ENCODE measurements at regions of chr15 and their contacts with region 1.

Region 1: DNA sequence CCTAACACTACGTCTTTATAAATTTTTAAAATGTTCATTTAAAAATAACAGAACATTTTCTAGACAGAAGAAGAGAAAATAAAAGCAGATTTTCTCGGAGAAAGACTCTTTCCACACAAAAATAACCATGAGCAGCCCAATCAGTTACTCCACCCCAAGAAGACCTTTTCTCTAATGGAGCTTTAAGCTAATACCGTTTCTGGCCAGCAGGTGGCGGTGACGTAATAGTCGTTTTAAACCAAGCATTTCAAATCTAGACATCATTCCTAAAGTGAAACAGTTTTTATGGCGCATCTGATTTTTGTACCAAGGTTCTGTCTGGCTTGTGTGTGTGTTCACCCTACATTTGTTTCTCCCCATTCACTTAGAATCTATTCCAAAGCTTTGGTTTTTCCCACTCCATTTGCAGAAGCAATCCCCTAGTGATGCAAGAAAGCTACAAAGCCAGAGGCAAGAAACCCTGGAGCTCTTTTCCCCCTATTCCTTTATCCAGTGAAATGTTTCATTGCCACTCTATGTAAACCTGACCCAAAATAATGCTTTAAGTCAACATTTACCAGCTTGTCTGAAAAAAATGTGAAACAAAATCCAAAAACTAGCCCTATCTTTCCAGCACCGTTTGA is 336.7 kb upstream of the IGF1R start:
- DNase-seq: peak; percentile 79 to 89 (median 81)
- H3K4me3 ChIP-seq: no peak overlapping the region
- H3K27ac ChIP-seq: no peak overlapping the region
- H3K4me1 ChIP-seq: no peaks in the 10 kb centered on the region
- H3K27me3 ChIP-seq: peaks cover 0 to 4% (median 0%) of the 10 kb centered on the region in 5 experiments

Region 2: DNA sequence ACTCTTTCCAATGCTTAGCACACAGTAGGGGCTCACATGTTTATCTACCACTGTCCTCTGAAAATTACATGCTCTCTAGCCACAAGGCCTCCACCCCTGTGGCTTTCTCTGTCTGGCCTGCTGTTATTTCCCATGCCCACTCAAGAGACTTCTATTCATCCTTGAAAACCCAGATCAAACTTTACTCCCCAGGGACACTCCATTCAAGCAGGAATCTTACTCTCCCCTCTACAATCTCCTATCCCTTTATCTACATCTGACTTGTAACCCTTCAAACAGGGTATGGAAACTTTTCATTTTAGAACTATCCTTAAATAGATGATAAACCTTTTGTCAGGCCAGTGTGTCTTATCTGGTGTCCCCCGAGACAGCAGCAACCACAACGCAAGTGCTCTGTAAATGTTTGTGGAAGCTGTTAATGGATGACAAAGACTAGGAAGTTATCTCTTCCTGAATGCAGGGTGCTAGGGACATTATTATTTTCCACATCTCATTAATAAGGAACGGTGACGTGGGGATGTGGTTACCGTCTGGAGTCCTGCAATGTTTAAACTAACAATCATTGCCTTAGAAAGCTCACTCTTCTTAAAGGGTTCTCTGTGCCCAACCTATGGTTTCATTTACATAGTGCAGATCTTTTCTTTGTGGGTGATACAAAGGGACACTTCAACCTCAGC is 28.9 kb before region 1 on chr15:
- CTCF ChIA-PET with region 1: no interaction called
- POLR2A ChIA-PET with region 1: no interaction called
- DNase-seq: peak; percentile 29 to 67 (median 44)
- H3K4me3 ChIP-seq: no peak overlapping the region
- H3K27ac ChIP-seq: no peak overlapping the region
- H3K4me1 ChIP-seq: peaks cover 0 to 13% (median 0%) of the 10 kb centered on the region in 4 experiments
- H3K27me3 ChIP-seq: peaks cover 0 to 13% (median 7%) of the 10 kb centered on the region in 5 experiments

Region 3: GRCh38 chr15:98375513-98376340 is 64.0 kb after region 1 on chr15:
- CTCF ChIA-PET with region 1: no interaction called
- POLR2A ChIA-PET with region 1: no interaction called
- DNase-seq: no peak
- H3K4me3 ChIP-seq: no peak overlapping the region
- H3K27ac ChIP-seq: no peak overlapping the region
- H3K4me1 ChIP-seq: peaks cover 0 to 2% (median 0%) of the 10 kb centered on the region in 4 experiments
- H3K27me3 ChIP-seq: peaks cover 0 to 2% (median 0%) of the 10 kb centered on the region in 5 experiments

Region 4: DNA sequence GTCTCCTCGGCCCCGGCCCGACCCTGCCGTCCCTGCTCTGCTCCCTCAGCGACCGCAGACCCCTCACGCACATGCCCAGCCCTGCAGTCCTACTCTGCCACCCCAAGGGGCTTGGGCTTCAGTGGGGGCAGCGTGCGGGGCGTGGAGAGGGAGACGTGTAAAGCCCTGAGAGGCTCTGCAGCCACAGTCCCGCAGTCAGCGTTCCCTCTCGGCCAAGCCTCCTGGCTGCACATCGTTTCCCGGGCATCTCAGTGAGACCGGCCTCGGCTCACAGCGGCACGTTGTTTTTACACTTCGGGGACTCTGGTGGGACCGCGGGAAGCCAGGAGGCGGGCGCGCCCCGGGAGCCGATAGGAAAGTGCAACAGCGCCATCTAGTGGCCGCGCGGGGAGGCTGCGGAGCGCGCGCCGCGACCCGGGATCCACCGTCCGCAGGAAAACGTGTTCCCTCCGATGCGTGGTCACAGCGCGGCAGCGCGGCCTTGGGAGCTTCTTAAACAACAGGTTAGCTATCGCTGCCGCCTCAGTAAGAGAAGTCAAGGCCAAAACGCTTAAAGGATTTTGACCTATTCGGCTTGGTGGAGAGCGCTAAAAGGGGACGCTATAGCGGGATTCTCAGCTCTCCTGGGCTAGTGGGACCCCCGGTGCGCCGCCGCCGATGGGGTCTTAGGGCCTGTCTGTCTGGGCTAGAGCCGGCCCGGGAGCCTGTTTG is 109.9 kb after region 1 on chr15:
- CTCF ChIA-PET with region 1: interaction called, 42 read pairs
- POLR2A ChIA-PET with region 1: no interaction called
- DNase-seq: peak; percentile 50 to 67 (median 65)
- H3K4me3 ChIP-seq: peak overlapping the region in 4 of 7 experiments; percentile 19 to 56 (median 25)
- H3K27ac ChIP-seq: no peak overlapping the region
- H3K4me1 ChIP-seq: peaks cover 0 to 17% (median 11%) of the 10 kb centered on the region in 4 experiments
- H3K27me3 ChIP-seq: peaks cover 0 to 81% (median 35%) of the 10 kb centered on the region in 5 experiments

Region 5: DNA sequence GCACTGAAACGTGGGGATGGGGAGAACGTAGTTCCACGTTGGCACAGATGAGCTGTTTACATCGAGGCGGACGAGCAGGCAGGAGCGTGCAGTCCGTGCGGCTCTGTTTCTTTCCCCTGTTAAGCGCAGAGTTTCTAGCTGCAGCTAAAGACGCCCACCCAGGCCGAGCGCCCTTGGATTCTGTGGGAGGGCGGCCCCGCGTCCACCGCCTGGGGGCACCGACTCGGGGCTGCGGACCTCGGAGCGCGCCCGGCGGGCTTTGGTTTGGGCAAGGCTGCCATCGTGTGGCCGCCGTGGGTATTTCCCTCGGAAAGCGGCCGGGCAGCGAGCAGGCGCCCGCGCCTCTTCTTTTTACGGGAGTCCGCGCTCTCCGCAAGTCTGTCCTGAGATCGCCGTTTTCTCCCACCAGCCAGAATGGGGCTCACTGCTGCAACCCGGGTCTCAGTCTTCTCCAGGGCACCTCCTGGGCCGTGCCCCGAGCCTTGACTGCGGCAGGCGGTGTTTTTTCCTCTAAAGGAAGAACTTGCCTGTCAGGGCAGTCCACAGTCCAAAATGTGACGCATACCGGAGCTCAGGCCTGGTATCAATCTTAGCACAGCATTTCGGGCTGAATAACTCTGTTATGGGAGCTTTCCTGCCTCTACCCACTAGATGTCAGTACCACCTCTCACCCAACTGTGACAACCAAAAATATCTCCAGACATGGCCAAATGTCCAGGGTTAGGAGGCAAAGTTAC is 116.7 kb after region 1 on chr15:
- CTCF ChIA-PET with region 1: interaction called, 42 read pairs
- POLR2A ChIA-PET with region 1: no interaction called
- DNase-seq: peak; percentile 69 to 81 (median 77)
- H3K4me3 ChIP-seq: peak overlapping the region in 6 of 7 experiments; percentile 16 to 76 (median 51)
- H3K27ac ChIP-seq: no peak overlapping the region
- H3K4me1 ChIP-seq: peaks cover 0 to 9% (median 7%) of the 10 kb centered on the region in 4 experiments
- H3K27me3 ChIP-seq: peaks cover 0 to 57% (median 16%) of the 10 kb centered on the region in 5 experiments

Region 6: DNA sequence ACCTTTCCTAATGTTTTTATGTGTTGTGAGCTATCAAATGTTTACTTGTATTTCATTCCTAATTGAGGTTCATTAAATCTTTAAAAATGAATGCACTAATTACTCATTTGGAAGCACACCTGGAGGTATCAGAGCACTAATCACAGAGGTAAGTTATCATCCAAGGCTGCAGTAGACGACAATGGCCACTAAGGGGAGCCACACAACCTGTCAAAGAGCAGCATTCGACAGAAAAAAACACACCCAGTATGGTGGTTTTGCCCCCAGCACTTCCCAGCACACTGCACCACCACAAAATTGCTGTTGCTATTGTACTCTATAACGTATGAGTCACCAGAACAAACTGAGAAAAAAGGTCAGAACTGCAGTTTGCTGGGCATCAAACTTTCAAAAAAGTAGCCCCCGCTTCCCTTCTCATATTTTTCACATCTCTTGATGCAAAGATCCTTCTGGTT is 130.7 kb after region 1 on chr15:
- CTCF ChIA-PET with region 1: no interaction called
- POLR2A ChIA-PET with region 1: no interaction called
- DNase-seq: peak; percentile 83 to 93 (median 93)
- H3K4me3 ChIP-seq: peak overlapping the region in 1 of 7 experiments; percentile 26
- H3K27ac ChIP-seq: no peak overlapping the region
- H3K4me1 ChIP-seq: peaks cover 0 to 7% (median 3%) of the 10 kb centered on the region in 4 experiments
- H3K27me3 ChIP-seq: peaks cover 0 to 4% (median 0%) of the 10 kb centered on the region in 5 experiments